ENCODE measurements at regions of chr11 and their contacts with region 1.

Region 1: GRCh38 chr11:104581246-104581980 is 316.8 kb downstream of the CASP12 start:
- DNase-seq: peak; percentile 84
- H3K4me3 ChIP-seq: no peak overlapping the region
- H3K27ac ChIP-seq: no peak overlapping the region
- H3K4me1 ChIP-seq: peaks cover 15% of the 10 kb centered on the region
- H3K27me3 ChIP-seq: no peaks in the 10 kb centered on the region
- CTCF ChIP-seq: no peak

Region 2: DNA sequence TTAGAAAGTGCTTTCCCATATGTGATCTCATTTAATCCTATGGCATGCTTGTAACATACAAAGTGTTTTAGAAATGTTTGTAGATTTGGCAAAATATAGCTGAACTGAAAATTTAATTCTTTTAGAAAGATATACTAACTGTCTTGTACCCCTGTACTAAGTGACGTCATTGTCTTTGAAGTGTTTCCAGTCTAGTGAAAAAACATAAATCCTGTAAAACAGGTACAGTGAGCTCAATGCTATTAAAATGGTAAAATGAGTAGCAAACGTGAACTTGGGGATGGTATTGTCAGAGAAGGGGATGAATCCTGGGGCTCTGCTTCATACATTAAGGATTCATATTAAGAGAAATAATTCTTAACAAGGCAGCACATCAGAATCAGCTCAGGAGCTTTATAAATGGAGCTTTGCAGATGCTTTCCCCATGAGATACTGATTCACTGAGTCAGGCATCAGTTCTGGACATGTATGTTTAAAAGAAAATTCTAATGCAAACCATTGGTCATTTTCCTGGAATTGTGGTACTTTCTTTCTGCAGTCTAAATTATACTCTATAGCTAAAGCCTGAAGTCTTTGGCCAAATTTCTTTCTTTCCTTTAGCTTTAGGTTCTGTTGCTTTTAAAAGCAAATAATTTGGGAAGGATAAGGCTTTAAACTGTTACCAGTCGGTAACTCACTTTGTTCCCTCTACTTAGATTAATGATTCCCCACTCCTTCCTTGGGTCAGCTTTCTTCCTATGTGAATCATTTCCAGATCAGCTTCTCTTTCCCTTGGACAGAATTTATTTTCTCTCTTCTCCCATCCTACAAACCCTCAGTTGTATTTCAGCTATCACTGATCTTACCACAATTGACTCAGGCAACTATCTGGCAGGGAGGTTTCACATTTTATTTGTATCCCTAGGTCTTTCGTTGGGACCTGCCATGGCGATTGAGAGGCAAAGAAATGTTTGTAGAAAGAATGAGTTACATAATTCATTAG is 602.5 kb before region 1 on chr11:
- CTCF ChIA-PET with region 1: no interaction called
- POLR2A ChIA-PET with region 1: no interaction called
- intact Hi-C with region 1: no loop called
- DNase-seq: no peak
- H3K4me3 ChIP-seq: no peak overlapping the region
- H3K27ac ChIP-seq: no peak overlapping the region
- H3K4me1 ChIP-seq: no peaks in the 10 kb centered on the region
- H3K27me3 ChIP-seq: no peaks in the 10 kb centered on the region
- CTCF ChIP-seq: no peak

Region 3: GRCh38 chr11:104254347-104254746 is 327.1 kb before region 1 on chr11:
- CTCF ChIA-PET with region 1: no interaction called
- POLR2A ChIA-PET with region 1: no interaction called
- intact Hi-C with region 1: loop called (anchors 10 kb)
- DNase-seq: peak; percentile 81
- H3K4me3 ChIP-seq: no peak overlapping the region
- H3K27ac ChIP-seq: no peak overlapping the region
- H3K4me1 ChIP-seq: no peaks in the 10 kb centered on the region
- H3K27me3 ChIP-seq: no peaks in the 10 kb centered on the region
- CTCF ChIP-seq: peak; percentile 93

Region 4: DNA sequence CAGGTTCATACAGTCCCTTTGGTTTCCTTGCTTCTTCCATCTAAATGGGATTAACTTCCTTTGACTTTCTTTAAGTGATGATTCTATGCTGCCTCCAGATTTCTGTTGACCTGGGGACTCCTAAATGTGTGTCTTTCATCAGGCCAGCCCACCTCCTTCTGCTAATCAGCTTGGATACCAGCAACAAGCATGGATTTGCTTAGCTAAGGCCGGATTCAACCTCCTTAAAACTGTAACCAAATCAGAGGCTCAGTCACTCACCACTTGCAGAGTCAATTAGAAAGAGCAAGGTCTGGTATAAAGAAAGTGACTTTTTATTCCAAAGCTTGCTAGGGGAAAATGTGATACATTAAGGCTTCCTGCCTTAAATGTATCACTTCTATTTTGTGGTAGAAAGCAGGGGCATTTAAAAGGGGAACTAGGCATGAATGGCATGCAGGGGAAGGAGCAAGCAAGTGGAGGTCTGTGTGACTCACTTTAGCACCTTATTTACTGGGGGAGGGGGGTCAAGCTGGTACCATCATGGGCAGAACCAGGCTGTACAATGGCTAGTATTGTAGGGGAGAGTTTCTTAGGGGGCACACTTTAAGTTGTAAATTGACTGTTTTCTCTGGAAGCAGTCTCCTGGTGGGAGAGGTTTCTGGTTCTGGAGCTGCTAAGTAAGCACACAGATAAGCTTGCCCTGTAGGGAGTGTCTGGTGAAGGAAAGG is 178.4 kb before region 1 on chr11:
- CTCF ChIA-PET with region 1: no interaction called
- POLR2A ChIA-PET with region 1: no interaction called
- intact Hi-C with region 1: no loop called
- DNase-seq: no peak
- H3K4me3 ChIP-seq: no peak overlapping the region
- H3K27ac ChIP-seq: no peak overlapping the region
- H3K4me1 ChIP-seq: no peaks in the 10 kb centered on the region
- H3K27me3 ChIP-seq: no peaks in the 10 kb centered on the region
- CTCF ChIP-seq: no peak

Region 5: DNA sequence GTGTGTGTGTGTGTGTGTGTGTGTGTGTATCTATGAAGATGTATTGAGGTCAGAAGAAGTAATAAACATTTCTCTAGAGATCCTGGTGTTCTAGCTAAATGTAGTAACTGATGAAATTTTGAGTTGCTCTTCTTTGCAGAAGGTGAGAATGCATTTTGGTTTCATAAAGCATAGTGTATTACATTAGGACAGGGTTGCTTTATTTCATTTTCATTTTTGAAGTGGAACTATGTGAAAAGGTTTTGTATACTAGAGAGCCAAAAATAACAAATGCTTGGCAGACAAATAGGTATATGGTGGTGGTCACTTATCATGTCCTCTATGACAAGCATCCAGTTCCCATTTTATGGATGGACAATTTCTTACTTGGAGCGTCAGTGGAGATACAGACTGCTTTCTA is 217.8 kb after region 1 on chr11:
- CTCF ChIA-PET with region 1: no interaction called
- POLR2A ChIA-PET with region 1: no interaction called
- intact Hi-C with region 1: no loop called
- DNase-seq: no peak
- H3K4me3 ChIP-seq: no peak overlapping the region
- H3K27ac ChIP-seq: no peak overlapping the region
- H3K4me1 ChIP-seq: no peaks in the 10 kb centered on the region
- H3K27me3 ChIP-seq: no peaks in the 10 kb centered on the region
- CTCF ChIP-seq: no peak